Vagina (tissue), 2 donors: ENCODE measurements at regions of chr12 and their contacts with region 1.

Region 1: DNA sequence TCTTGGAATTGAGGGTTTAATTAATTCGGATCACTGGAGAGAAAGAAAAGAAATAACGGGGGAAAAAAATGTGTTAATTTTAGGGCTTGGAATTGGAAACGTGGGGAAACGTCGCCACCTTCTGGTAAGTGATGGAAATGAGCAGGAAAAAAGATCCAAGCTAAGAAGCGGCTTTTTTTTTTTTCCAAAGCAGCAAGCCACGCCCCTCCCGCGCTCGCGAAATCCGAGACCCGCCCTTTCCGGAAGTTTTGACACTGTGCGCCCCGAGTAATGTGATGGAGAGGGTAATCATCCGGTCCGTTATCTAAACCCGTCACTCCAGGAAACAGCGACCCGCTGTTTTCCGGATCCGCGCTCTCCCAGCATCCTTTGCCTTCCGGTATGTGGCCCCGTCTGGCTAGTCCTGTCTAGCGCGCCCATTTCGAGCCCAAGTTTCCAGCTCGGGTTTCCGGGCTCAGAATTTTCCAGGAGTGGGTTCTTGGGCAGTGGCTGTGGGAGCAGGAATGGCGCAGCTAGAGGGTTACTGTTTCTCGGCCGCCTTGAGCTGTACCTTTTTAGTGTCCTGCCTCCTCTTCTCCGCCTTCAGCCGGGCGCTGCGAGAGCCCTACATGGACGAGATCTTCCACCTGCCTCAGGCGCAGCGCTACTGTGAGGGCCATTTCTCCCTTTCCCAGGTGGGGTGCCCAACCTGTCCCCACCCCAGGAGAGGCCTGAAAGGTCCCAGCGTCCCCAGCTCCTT is at the start of gene ALG10B:
- DNase-seq: peak in 1 of 2 donors; percentile 97
- H3K4me3 ChIP-seq: peak within 1 kb of the TSS; percentile 60 to 61
- H3K27ac ChIP-seq: peak within 1 kb of the TSS; percentile 82
- H3K4me1 ChIP-seq: peaks cover 11% of the 10 kb centered on the region
- H3K27me3 ChIP-seq: no peaks in the 10 kb centered on the region
- CTCF ChIP-seq: peak in 2 of 3 experiments; percentile 56 to 66
- POLR2A ChIP-seq: no peak
- total RNA-seq, gene ALG10B: 11.8 TPM

Region 2: GRCh38 chr12:38138225-38139221 is 178.0 kb before region 1 on chr12:
- intact Hi-C with region 1: loop called (anchors 5 kb)
- DNase-seq: peak in 1 of 2 donors; percentile 22
- H3K4me3 ChIP-seq: peak overlapping the region; percentile 22 to 42
- H3K27ac ChIP-seq: no peak overlapping the region
- H3K4me1 ChIP-seq: peaks cover 9% of the 10 kb centered on the region
- H3K27me3 ChIP-seq: no peaks in the 10 kb centered on the region
- CTCF ChIP-seq: peak; percentile 91
- POLR2A ChIP-seq: no peak

Region 3: GRCh38 chr12:39103552-39104165 is 787.1 kb after region 1 on chr12:
- intact Hi-C with region 1: loop called (anchors 5 kb)
- DNase-seq: no peak
- H3K4me3 ChIP-seq: no peak overlapping the region
- H3K27ac ChIP-seq: no peak overlapping the region
- H3K4me1 ChIP-seq: no peaks in the 10 kb centered on the region
- H3K27me3 ChIP-seq: no peaks in the 10 kb centered on the region
- CTCF ChIP-seq: peak in 2 of 3 experiments; percentile 27 to 56
- POLR2A ChIP-seq: no peak